ENCODE measurements at regions of chr16 and their contacts with region 1.

Region 1: DNA sequence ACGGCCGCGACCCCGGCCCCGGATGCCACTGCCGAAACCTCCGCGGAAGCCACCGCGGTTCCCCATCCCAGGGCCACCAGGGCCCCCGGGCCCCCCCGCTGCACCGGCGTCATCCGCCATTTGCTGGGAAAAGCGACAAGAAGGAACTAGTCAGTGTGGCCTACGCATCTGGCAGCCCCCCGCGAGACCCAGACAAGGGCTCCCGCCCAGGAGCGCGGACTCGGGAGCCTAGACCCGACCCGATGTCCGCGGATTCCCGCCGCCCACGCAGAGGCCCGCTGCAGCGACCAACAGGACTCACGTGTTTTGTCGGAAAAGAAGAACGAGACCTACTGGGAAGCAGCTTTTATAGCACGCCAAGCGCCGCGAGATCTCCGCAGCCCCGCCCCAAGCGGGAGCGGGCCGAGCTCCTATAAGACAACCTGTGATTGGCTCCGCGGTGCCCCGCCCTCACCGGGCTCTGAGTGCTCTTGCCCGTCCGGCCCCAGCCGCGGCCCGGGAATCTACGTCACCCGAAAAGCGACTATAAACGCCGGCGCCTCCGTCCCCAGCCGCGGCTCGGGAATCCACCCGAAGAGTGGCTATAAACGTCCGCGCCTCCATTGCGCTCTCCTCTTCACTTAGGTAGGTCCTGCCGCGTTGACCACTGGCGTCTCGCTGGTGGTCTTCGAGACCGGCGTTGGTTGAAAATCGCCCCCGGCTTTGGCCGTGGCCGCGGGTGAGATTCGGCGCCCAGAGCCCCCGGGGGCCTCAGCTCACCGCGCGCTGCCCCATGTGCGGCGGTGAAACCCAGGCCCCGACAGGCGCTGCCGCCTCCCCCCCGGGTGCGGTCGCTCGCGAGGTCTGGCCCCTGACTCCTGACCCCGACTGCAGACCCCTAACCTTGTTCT is at the start of gene RPS2:
- DNase-seq: peak; percentile 95
- ATAC-seq: peak; percentile 93
- H3K4me3 Mint-ChIP-seq: peak within 1 kb of the TSS; percentile 92
- H3K27ac Mint-ChIP-seq: peak within 1 kb of the TSS; percentile 94
- H3K4me1 Mint-ChIP-seq: peaks cover 50% of the 10 kb centered on the region
- H3K27me3 Mint-ChIP-seq: no peaks in the 10 kb centered on the region
- CTCF ChIP-seq: no peak
- total RNA-seq, gene RPS2: 5,116 and 5,913 TPM in 2 replicates

Region 2: GRCh38 chr16:1913327-1914083 is 51.2 kb before region 1 on chr16:
- CTCF ChIA-PET with region 1: no interaction called
- POLR2A ChIA-PET with region 1: no interaction called
- intact Hi-C with region 1: no loop called
- DNase-seq: no peak
- ATAC-seq: no peak
- H3K4me3 Mint-ChIP-seq: no peak overlapping the region
- H3K27ac Mint-ChIP-seq: no peak overlapping the region
- H3K4me1 Mint-ChIP-seq: no peaks in the 10 kb centered on the region
- H3K27me3 Mint-ChIP-seq: peaks cover 20% of the 10 kb centered on the region
- CTCF ChIP-seq: no peak

Region 3: GRCh38 chr16:1929578-1930337 is 35.0 kb before region 1 on chr16:
- CTCF ChIA-PET with region 1: no interaction called
- POLR2A ChIA-PET with region 1: interaction called, 12 read pairs
- intact Hi-C with region 1: no loop called
- DNase-seq: peak; percentile 97
- ATAC-seq: peak; percentile 98
- H3K4me3 Mint-ChIP-seq: peak overlapping the region; percentile 64
- H3K27ac Mint-ChIP-seq: no peak overlapping the region
- H3K4me1 Mint-ChIP-seq: peaks cover 2% of the 10 kb centered on the region
- H3K27me3 Mint-ChIP-seq: peaks cover 6% of the 10 kb centered on the region
- CTCF ChIP-seq: peak; percentile 92

Region 4: GRCh38 chr16:1991948-1992703 is 27.4 kb after region 1 on chr16:
- CTCF ChIA-PET with region 1: interaction called, 3 read pairs
- POLR2A ChIA-PET with region 1: interaction called, 351 read pairs
- intact Hi-C with region 1: loop called (anchors 1 kb)
- DNase-seq: peak; percentile 95
- ATAC-seq: peak; percentile 79
- H3K4me3 Mint-ChIP-seq: peak overlapping the region; percentile 82
- H3K27ac Mint-ChIP-seq: peak overlapping the region; percentile 88
- H3K4me1 Mint-ChIP-seq: peaks cover 29% of the 10 kb centered on the region
- H3K27me3 Mint-ChIP-seq: no peaks in the 10 kb centered on the region
- CTCF ChIP-seq: no peak

Region 5: DNA sequence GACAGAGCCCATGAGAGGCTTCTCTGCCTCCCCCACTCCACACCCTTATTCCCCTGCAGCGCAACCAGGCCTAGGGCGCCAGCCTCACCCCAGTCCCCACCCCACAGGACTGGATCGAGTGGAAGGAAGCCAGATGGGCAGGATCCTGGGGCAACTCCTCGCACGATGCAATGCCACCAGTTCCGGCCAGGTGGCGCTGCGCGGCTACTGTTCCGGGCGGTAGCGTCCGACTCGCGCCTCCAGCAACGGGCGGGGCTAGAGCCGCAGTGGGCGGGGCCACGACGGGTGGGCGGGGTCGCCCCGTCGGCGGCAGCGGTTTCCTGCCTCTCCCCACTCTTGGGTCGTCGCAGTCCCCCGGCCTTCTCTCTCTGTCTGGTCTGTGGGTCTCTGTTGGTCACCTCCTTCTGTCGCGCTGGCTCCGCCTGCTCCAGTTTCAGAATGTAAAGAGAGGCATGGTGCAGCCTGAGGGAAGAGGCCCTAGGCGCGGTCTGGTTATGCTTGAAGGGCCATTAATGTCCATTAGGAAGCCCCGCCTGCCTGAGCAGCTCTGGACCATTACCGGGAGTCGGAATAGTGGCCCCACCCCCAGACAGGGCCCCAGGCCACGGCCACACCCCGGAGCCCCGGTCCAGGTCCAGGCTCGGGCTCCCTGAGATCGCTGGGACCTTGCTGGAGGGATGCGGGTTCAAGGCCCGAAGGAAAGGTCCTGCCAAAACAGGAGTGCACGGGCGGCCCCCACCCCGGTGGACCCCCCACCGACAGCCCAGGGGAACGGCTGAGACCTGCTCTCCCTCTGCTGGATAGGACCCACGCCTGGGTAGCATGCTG is 58.6 kb after region 1 on chr16:
- CTCF ChIA-PET with region 1: no interaction called
- POLR2A ChIA-PET with region 1: interaction called, 10 read pairs
- intact Hi-C with region 1: no loop called
- DNase-seq: peak; percentile 97
- ATAC-seq: peak; percentile 94
- H3K4me3 Mint-ChIP-seq: peak overlapping the region; percentile 79
- H3K27ac Mint-ChIP-seq: peak overlapping the region; percentile 73
- H3K4me1 Mint-ChIP-seq: peaks cover 24% of the 10 kb centered on the region
- H3K27me3 Mint-ChIP-seq: peaks cover 27% of the 10 kb centered on the region
- CTCF ChIP-seq: peak; percentile 82

Region 6: GRCh38 chr16:2251483-2252240 is 286.9 kb after region 1 on chr16 and contains the start of gene ECI1:
- CTCF ChIA-PET with region 1: no interaction called
- POLR2A ChIA-PET with region 1: interaction called, 10 read pairs
- intact Hi-C with region 1: no loop called
- DNase-seq: peak; percentile 85
- ATAC-seq: peak; percentile 90
- H3K4me3 Mint-ChIP-seq: peak within 1 kb of the TSS; percentile 86
- H3K27ac Mint-ChIP-seq: peak within 1 kb of the TSS; percentile 90
- H3K4me1 Mint-ChIP-seq: peaks cover 35% of the 10 kb centered on the region
- H3K27me3 Mint-ChIP-seq: no peaks in the 10 kb centered on the region
- CTCF ChIP-seq: no peak
- total RNA-seq, gene ECI1: 38.1 and 43.0 TPM in 2 replicates